ENCODE measurements at regions of chr20 and their contacts with region 1.

Region 1: GRCh38 chr20:1776681-1777475 is 118.3 kb upstream of the SIRPA start:
- DNase-seq: peak; percentile 83
- H3K4me3 Mint-ChIP-seq: peak overlapping the region; percentile 72
- H3K27ac Mint-ChIP-seq: no peak overlapping the region
- H3K4me1 Mint-ChIP-seq: peaks cover 12% of the 10 kb centered on the region
- H3K27me3 Mint-ChIP-seq: peaks cover 12% of the 10 kb centered on the region

Region 2: DNA sequence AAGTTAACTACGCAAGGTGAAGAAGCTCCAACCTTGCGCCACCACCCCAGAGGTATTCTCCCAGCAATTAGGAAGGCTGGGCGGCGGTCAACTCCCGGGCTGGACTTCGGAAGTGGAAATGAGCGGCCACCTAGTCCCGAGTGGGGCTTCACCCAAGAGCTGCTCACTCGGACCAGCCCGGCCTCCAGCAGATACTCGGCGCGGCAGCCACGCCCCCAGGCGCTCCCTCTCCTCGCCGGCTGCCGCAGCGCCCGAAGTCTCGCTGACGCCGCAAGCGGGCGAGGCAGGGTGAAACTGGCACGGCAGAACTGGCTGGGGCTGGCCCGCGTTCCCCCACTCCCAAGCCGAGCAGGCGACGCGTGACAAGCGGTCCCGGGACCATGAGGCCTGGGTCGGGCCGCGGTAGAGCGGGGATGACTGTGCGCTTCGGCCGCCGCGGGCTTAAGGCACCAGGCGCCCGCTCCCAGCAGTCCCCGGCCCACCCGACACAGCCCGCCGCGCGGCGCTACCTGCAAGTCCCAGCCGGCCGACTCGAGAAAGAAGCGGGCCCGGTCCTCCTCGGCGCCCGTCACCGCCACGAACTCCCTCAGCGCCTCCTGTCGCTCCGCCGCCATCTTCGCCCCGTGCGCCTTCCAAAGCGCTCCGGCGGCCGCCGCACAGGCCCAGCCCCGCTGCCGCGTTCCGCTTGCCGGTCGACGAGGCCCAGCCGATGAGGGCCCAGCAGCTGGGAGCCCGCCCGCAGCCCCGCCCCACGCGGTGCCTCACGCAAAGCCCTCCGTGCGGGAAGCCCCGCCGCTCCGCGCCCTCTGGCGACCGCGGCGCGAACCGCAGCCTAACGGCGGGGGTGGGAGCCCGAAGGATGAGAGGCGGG is 310.4 kb before region 1 on chr20 and contains the start of gene NSFL1C:
- CTCF ChIA-PET with region 1: interaction called, 17 read pairs
- POLR2A ChIA-PET with region 1: no interaction called
- DNase-seq: peak; percentile 98
- H3K4me3 Mint-ChIP-seq: peak within 1 kb of the TSS; percentile 85
- H3K27ac Mint-ChIP-seq: peak within 1 kb of the TSS; percentile 68
- H3K4me1 Mint-ChIP-seq: peaks cover 43% of the 10 kb centered on the region
- H3K27me3 Mint-ChIP-seq: peaks cover 20% of the 10 kb centered on the region
- total RNA-seq, gene NSFL1C: 49.2 to 49.6 TPM

Region 3: DNA sequence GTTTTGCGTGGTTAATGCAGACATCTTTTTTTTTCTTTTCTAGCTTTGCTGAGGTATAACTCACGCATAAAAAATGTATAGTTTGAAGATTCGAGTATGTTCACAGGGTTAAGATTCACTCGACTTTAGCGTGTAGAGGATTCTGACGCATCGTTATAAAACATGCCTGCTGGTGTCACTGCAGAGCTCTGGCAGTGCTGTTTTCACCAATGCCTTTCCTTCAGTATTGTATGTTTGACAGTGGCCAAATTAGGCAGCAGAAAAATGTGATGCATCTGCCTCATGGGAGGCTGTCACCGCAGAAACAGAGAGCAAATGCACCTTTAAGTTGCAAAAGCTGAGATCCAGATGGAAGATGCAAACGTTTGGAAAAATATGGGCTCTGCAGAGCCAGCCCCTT is 267.6 kb before region 1 on chr20:
- CTCF ChIA-PET with region 1: interaction called, 48 read pairs
- POLR2A ChIA-PET with region 1: no interaction called
- DNase-seq: no peak
- H3K4me3 Mint-ChIP-seq: no peak overlapping the region
- H3K27ac Mint-ChIP-seq: no peak overlapping the region
- H3K4me1 Mint-ChIP-seq: no peaks in the 10 kb centered on the region
- H3K27me3 Mint-ChIP-seq: peaks cover 45% of the 10 kb centered on the region

Region 4: GRCh38 chr20:1539816-1540419 is 237.0 kb before region 1 on chr20:
- CTCF ChIA-PET with region 1: interaction called, 11 read pairs
- POLR2A ChIA-PET with region 1: no interaction called
- DNase-seq: no peak
- H3K4me3 Mint-ChIP-seq: no peak overlapping the region
- H3K27ac Mint-ChIP-seq: no peak overlapping the region
- H3K4me1 Mint-ChIP-seq: no peaks in the 10 kb centered on the region
- H3K27me3 Mint-ChIP-seq: peaks cover 32% of the 10 kb centered on the region

Region 5: GRCh38 chr20:1764136-1765033 is 12.5 kb before region 1 on chr20:
- CTCF ChIA-PET with region 1: interaction called, 79 read pairs
- POLR2A ChIA-PET with region 1: no interaction called
- DNase-seq: peak; percentile 68
- H3K4me3 Mint-ChIP-seq: no peak overlapping the region
- H3K27ac Mint-ChIP-seq: no peak overlapping the region
- H3K4me1 Mint-ChIP-seq: no peaks in the 10 kb centered on the region
- H3K27me3 Mint-ChIP-seq: peaks cover 4% of the 10 kb centered on the region

Measured in activated CD4-positive, alpha-beta memory T cell treated with anti-CD3 and anti-CD28 coated beads, Interleukin-2, amount 10 ng/mL, durations not matched to agents 7 days and 5 days (primary cell).